Cardiac septum (tissue), 1 donor: ENCODE measurements at regions of chr18 and their contacts with region 1.

Region 1: GRCh38 chr18:58768293-58768974 is 96.2 kb upstream of the ZNF532 start:
- DNase-seq: peak; percentile 84

Region 2: DNA sequence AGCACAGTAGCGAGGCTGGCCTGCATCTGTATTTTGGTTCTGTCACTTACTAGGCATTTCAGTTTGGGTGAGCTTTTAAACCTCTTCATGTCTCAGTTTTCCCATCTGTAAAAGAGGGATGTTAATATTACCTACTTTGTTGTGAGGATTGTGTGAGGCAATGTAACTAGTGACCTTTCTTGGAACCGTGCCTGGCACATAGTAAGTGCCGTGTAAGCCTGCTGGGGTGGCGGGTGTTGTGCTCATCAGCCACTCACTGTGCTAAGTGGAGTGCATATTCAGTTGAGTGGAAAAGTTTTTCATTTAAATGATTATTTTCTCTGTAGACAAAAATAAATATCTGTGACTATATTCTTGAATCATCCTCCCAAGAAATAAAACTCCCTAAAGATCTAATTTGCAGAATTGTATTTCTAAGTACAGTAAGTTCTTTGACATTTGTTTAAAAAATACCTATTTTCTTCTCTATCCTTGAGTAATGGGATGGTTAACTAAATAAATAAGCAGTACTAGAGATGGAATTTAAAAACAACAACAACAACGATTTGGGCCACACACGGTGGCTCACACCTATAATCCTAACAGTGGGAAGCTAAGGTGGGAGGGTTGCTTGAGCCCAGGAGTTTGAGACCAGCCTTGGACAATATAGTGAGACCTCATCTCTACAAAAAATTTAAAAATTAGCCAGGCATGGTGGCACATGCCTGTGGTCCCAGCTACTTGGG is 40.5 kb before region 1 on chr18:
- intact Hi-C with region 1: no loop called
- DNase-seq: no peak

Region 3: GRCh38 chr18:59070181-59070912 is 301.9 kb after region 1 on chr18:
- intact Hi-C with region 1: loop called (anchors 2 kb)
- DNase-seq: peak; percentile 82